ENCODE measurements at regions of chr19 and their contacts with region 1.

Region 1: GRCh38 chr19:1672038-1672768 is 19.8 kb upstream of the TCF3 start:
- DNase-seq: peak in 8 of 9 experiments; percentile 46 to 78 (median 66)
- ATAC-seq: peak; percentile 66
- H3K4me3 ChIP-seq: peak overlapping the region; percentile 20 to 30
- H3K4me3 Mint-ChIP-seq: no peak overlapping the region
- H3K27ac ChIP-seq: no peak overlapping the region
- H3K27ac Mint-ChIP-seq: no peak overlapping the region
- H3K4me1 ChIP-seq: peaks cover 19% of the 10 kb centered on the region
- H3K4me1 Mint-ChIP-seq: peaks cover 16% of the 10 kb centered on the region
- H3K27me3 ChIP-seq: peaks cover 22 to 50% of the 10 kb centered on the region in 2 experiments
- H3K27me3 Mint-ChIP-seq: peaks cover 48% of the 10 kb centered on the region
- CTCF ChIP-seq: peak; percentile 94

Region 2: DNA sequence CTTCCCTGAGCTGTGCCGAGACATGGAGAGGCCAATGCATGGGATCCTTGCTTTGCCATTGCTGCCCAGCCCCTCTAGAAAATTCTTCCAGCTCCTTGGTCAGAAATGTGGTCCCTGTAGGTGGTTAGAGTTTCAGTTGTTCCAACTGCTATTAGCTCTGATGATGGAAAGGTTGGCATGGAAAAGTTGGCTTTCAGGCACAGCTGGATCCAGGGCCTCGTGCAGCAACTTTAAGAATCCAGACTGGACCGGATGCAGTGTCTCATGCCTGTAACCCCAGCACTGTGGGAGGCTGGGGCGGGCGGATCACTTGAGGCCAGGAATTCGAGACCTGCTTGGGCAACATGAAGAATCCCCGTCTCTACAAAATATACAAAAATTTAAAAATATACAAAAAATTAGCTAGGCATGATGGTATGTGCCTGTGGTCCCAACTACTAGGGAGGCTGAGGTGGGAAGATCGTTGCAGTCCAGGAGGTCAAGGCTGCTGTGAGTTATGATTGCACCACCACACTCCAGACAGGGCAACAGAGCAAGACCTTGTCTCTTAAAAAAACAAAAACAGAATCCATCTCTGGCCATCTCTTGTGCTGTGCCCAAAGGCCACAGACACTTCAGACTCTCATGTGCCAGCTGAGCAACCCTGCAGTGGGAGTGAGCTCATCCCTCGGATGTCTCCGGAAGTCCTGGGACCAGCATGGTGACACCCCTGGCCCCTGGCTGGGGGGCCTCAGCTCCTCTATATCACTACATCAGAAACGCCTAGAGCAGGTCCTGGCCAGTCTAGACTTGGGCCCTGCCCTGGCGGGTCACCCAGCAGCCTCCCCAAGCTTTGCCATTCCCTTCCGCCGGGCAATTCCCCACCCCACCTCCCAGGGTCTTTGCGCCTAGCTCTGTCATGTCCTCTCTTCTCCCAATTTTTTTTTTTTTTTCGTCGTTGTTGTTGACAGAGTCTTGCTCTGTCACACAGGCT is 120.8 kb before region 1 on chr19:
- CTCF ChIA-PET with region 1: interaction called, 70 read pairs
- POLR2A ChIA-PET with region 1: no interaction called
- intact Hi-C with region 1: loop called in 1 of 2 experiments (anchors 1 kb)
- DNase-seq: no peak
- ATAC-seq: no peak
- H3K4me3 ChIP-seq: no peak overlapping the region
- H3K4me3 Mint-ChIP-seq: no peak overlapping the region
- H3K27ac ChIP-seq: no peak overlapping the region
- H3K27ac Mint-ChIP-seq: no peak overlapping the region
- H3K4me1 ChIP-seq: no peaks in the 10 kb centered on the region
- H3K4me1 Mint-ChIP-seq: peaks cover under 1% of the 10 kb centered on the region
- H3K27me3 ChIP-seq: peaks cover 0 to 2% of the 10 kb centered on the region in 2 experiments
- H3K27me3 Mint-ChIP-seq: peaks cover 12% of the 10 kb centered on the region
- CTCF ChIP-seq: no peak

Region 3: DNA sequence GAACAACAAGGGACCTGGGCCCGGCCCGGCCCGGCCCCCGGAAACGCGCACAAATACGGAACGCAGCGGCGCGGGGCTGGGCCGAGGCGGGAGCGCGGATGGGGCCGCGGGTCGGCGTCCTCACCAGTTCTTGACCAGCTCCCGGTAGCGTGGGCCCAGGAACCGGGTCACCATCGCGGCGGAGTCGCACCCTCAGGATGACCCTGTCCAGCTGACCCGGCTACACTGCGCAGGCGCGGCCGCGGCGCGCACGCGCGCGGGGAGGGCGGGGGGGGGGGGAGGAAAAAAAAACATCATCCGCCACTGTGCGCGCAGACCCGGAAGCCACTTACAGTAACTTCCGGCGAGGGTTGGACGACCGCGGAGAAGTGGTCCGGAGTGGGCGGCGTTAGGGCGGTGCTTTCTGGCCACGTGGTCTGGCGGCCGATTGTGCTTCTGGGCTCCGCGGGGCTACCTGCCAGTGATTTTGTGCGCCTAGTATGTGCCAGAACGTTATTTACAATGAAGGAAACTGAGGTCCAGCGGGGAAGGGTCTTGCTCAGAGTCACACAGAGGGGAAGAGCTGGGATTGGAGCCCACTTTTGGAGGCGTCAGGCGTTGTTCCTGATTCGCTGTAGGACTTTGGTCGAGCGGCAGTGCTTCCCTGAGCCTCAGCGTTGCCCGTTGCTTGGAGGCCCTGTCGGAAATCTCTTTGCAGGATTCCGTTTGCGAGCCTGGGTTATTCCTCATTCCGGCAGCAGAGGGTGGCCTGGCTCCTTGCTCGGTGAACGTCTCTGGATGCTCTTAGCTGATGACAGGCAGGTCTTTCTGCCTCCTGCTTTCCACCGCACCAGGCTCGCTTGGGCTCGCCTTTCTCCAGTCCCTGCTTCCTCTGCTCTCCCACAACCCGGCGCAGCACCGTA is 66.7 kb before region 1 on chr19 and contains the start of gene UQCR11:
- CTCF ChIA-PET with region 1: interaction called, 28 read pairs
- POLR2A ChIA-PET with region 1: no interaction called
- intact Hi-C with region 1: loop called in 1 of 2 experiments (anchors 1 kb)
- DNase-seq: peak; percentile 76 to 96 (median 93)
- ATAC-seq: peak; percentile 83
- H3K4me3 ChIP-seq: peak within 1 kb of the TSS; percentile 76 to 100
- H3K4me3 Mint-ChIP-seq: peak within 1 kb of the TSS; percentile 99
- H3K27ac ChIP-seq: peak within 1 kb of the TSS; percentile 72 to 82
- H3K27ac Mint-ChIP-seq: peak within 1 kb of the TSS; percentile 99
- H3K4me1 ChIP-seq: peaks cover 51% of the 10 kb centered on the region
- H3K4me1 Mint-ChIP-seq: peaks cover 55% of the 10 kb centered on the region
- H3K27me3 ChIP-seq: no peaks in the 10 kb centered on the region
- H3K27me3 Mint-ChIP-seq: no peaks in the 10 kb centered on the region
- CTCF ChIP-seq: peak; percentile 90
- total RNA-seq, gene UQCR11: 97.1 to 98.0 TPM

Region 4: DNA sequence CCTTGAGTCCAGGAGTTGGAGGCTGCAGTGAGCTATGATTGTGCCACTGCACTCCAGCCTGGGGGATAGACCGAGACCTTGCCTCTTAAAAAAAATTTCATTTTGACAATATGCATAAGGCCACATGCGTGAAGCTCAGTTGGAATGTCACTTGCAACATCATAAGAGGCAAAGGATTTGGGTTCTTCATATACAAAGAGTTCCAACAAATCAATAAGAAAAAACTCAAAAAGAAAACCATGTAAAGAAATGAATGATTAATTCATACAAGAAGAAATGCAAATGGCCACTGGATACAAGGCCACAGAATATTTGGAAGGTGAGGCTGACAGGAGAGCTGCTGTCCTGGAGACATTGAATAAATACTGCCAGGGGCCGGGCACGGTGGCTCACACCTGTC is 10.2 kb before region 1 on chr19:
- CTCF ChIA-PET with region 1: interaction called, 11 read pairs
- POLR2A ChIA-PET with region 1: no interaction called
- intact Hi-C with region 1: no loop called
- DNase-seq: no peak
- ATAC-seq: no peak
- H3K4me3 ChIP-seq: no peak overlapping the region
- H3K4me3 Mint-ChIP-seq: no peak overlapping the region
- H3K27ac ChIP-seq: no peak overlapping the region
- H3K27ac Mint-ChIP-seq: no peak overlapping the region
- H3K4me1 ChIP-seq: no peaks in the 10 kb centered on the region
- H3K4me1 Mint-ChIP-seq: peaks cover 3% of the 10 kb centered on the region
- H3K27me3 ChIP-seq: no peaks in the 10 kb centered on the region
- H3K27me3 Mint-ChIP-seq: no peaks in the 10 kb centered on the region
- CTCF ChIP-seq: no peak

Measured in CD8-positive, alpha-beta T cell (primary cell).